ENCODE measurements at regions of chr6 and their contacts with region 1.

Region 1: DNA sequence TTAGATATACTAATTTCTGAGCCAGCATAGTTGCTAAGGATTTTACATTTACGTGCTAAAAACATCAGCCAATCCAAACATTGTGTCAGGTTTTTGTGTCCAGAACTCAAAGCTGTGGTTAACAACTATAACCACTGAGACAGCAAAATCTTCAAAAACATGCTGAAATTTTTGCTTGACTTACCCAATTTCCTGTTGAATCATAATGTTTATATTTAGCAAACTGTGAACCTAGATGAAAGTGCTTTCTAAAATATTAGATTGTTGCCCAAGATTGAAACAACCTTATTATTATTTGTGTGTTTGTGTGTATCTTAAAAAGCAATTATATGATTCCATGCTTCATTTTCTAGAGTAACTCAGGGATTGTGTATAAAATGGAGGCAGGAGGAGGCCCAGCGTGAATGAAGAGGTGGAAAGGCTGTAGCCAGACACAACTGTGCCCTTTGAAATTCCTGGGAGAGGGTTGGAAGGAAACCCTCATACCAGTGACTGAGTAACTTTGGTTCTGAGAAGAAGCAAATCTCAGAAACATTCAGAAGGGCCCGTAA is 48.0 kb downstream of the ARMC2 start:
- DNase-seq: no peak
- H3K4me3 ChIP-seq: no peak overlapping the region
- H3K27ac ChIP-seq: peak overlapping the region in 3 of 5 donors; percentile 32 to 79 (median 67)
- H3K4me1 ChIP-seq: peaks cover 8 to 35% of the 10 kb centered on the region in 2 donors
- H3K27me3 ChIP-seq: no peaks in the 10 kb centered on the region
- CTCF ChIP-seq: no peak
- POLR2A ChIP-seq: no peak

Region 2: GRCh38 chr6:108549732-108550131 is 346.5 kb before region 1 on chr6:
- intact Hi-C with region 1: loop called (anchors 5 kb)
- DNase-seq: no peak
- H3K4me3 ChIP-seq: no peak overlapping the region
- H3K27ac ChIP-seq: no peak overlapping the region
- H3K4me1 ChIP-seq: no peaks in the 10 kb centered on the region
- H3K27me3 ChIP-seq: no peaks in the 10 kb centered on the region
- CTCF ChIP-seq: no peak
- POLR2A ChIP-seq: no peak

Region 3: GRCh38 chr6:108742041-108742440 is 154.1 kb before region 1 on chr6:
- intact Hi-C with region 1: no loop called
- DNase-seq: no peak
- H3K4me3 ChIP-seq: no peak overlapping the region
- H3K27ac ChIP-seq: no peak overlapping the region
- H3K4me1 ChIP-seq: peaks cover 0 to 5% of the 10 kb centered on the region in 2 donors
- H3K27me3 ChIP-seq: no peaks in the 10 kb centered on the region
- CTCF ChIP-seq: no peak
- POLR2A ChIP-seq: no peak

Region 4: DNA sequence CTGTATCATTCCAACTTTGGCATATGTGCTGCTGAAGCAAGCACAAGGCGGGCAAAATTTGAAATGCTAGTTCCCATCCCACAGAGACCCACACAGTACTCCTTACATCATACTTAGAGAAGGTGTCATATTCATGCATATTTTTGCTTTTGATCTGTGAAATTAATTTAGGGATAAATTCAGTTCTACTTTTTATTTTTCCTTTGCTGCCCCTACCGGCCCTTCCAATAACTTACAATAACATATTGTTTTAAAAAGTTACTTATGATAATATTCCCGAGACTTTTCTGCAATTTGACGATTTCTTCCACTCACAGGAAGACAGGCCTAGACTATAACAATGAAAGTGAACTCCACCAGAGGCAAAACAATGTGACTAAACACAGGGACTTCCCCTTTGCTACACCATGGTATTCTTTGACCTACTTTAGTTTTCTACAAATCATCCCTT is 163.4 kb after region 1 on chr6:
- intact Hi-C with region 1: loop called in 1 of 2 experiments (anchors 10 kb)
- DNase-seq: peak in 1 of 7 donors; percentile 28
- H3K4me3 ChIP-seq: peak overlapping the region in 1 of 4 donors; percentile 19
- H3K27ac ChIP-seq: peak overlapping the region; percentile 22 to 78 (median 49)
- H3K4me1 ChIP-seq: peaks cover 29 to 47% of the 10 kb centered on the region in 2 donors
- H3K27me3 ChIP-seq: no peaks in the 10 kb centered on the region
- CTCF ChIP-seq: peak in 5 of 6 experiments; percentile 11 to 39 (median 19)
- POLR2A ChIP-seq: no peak